ENCODE measurements at regions of chr6 and their contacts with region 1.

Region 1: DNA sequence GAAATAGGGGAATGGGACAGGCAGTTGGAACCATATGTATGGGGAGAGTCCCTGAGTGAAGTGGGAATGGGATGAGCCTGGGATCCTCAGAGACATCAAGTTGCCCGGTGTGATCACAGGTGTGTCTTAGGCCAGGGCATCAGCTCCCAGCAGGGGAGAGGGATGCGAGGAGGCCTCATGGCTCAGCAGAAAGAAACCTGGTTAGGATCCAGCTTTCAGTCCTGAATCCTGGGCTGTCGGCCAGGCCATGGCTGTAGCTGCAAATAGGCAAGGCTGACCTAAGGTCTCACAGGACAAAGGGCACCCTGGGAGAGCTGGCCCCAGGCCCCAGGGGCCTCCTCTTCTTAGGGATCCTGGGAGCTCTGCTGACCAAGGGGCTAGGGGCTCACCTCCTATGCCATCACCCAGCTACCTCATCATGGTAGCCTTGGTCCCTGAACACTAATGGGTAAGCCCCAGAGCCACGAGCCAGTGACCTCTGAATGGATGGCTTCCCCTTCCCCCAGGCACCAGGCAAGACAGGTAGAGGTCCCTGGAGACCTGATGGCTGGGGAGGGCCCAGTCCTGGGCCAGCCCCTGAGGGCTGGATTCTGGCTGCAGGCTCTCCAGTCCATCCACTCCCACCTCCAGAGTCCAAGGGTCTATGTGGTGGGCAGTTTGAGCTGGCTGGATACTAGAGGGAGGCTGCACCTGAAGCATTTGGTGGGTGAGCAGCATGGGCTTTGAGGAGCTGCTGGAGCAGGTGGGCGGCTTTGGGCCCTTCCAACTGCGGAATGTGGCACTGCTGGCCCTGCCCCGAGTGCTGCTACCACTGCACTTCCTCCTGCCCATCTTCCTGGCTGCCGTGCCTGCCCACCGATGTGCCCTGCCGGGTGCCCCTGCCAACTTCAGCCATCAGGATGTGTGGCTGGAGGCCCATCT is at the start of gene SLC22A7:
- DNase-seq: peak; percentile 60
- ATAC-seq: peak; percentile 84
- H3K4me3 ChIP-seq: peak within 1 kb of the TSS; percentile 16 to 61 (median 17); a peak in 5 of 6 replicates
- H3K27ac ChIP-seq: peak within 1 kb of the TSS; percentile 70
- H3K4me1 ChIP-seq: peaks cover 72% of the 10 kb centered on the region
- H3K27me3 ChIP-seq: no peaks in the 10 kb centered on the region
- CTCF ChIP-seq: no peak
- EP300 ChIP-seq: peak in 1 of 2 experiments; percentile 51; a peak in 1 of 4 replicates
- POLR2A ChIP-seq: peak in 1 of 2 experiments; percentile 77; a peak in 2 of 4 replicates
- RAD21 ChIP-seq: peak; percentile 4; the same call in 1 of the 2 replicates
- total RNA-seq, gene SLC22A7: 8.6 and 22.6 TPM in 2 replicates

Region 2: GRCh38 chr6:43211955-43212354 is 85.9 kb before region 1 on chr6:
- CTCF ChIA-PET with region 1: no interaction called
- POLR2A ChIA-PET with region 1: no interaction called
- in situ Hi-C with region 1: no loop called
- intact Hi-C with region 1: no loop called
- DNase-seq: peak; percentile 30
- ATAC-seq: peak; percentile 67
- H3K4me3 ChIP-seq: no peak overlapping the region
- H3K27ac ChIP-seq: no peak overlapping the region
- H3K4me1 ChIP-seq: no peaks in the 10 kb centered on the region
- H3K27me3 ChIP-seq: no peaks in the 10 kb centered on the region
- CTCF ChIP-seq: peak; percentile 51
- EP300 ChIP-seq: no peak
- POLR2A ChIP-seq: no peak
- RAD21 ChIP-seq: no peak

Region 3: GRCh38 chr6:43269273-43270007 is 28.5 kb before region 1 on chr6:
- CTCF ChIA-PET with region 1: no interaction called
- POLR2A ChIA-PET with region 1: interaction called, 314 read pairs
- in situ Hi-C with region 1: no loop called
- intact Hi-C with region 1: no loop called
- DNase-seq: no peak
- ATAC-seq: no peak
- H3K4me3 ChIP-seq: no peak overlapping the region
- H3K27ac ChIP-seq: peak overlapping the region; percentile 91
- H3K4me1 ChIP-seq: peaks cover 99% of the 10 kb centered on the region
- H3K27me3 ChIP-seq: no peaks in the 10 kb centered on the region
- CTCF ChIP-seq: no peak
- EP300 ChIP-seq: no peak
- POLR2A ChIP-seq: no peak
- RAD21 ChIP-seq: no peak

Region 4: DNA sequence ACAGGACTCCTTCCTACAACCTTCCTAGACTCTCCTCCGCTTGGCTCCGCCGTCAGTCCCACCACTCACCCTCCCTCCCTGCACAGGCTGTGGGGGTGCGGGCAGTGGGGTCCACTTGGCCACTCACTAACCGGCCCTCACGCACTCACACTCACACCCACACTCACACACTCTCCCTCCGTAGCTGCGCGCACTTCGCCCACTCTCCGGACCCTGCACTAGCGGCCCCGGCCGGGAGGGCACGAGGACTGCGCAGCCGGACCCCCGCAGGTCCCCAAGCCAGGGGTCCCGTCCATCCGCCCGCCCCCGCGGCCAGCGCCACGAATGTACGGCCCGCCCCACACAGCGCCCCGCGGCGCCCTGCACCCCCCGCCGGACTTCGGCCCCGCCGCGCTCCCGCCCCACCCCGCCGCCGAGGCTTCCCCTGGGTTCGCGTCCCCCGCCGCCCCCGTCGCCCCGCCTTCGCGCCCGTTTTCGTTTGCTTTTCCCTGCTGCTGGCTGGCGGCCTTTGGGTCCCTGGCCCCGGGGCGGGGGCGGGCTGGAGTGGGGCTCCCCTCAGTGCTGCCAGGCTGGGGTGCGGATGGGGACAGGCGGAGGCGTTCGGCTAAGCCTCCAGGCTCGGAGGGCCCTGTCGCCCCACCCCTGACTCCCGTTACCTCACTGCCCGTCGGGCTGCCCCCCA is 22.8 kb before region 1 on chr6:
- CTCF ChIA-PET with region 1: no interaction called
- POLR2A ChIA-PET with region 1: interaction called, 314 read pairs
- in situ Hi-C with region 1: no loop called
- intact Hi-C with region 1: no loop called
- DNase-seq: peak; percentile 67
- ATAC-seq: peak; percentile 54
- H3K4me3 ChIP-seq: peak overlapping the region; percentile 59 to 86 (median 78)
- H3K27ac ChIP-seq: peak overlapping the region; percentile 94
- H3K4me1 ChIP-seq: peaks cover 96% of the 10 kb centered on the region
- H3K27me3 ChIP-seq: no peaks in the 10 kb centered on the region
- CTCF ChIP-seq: peak; percentile 6; the same call in 1 of the 2 replicates
- EP300 ChIP-seq: peak; percentile 11 to 80; a peak in 2 of 4 replicates
- POLR2A ChIP-seq: peak in 1 of 2 experiments; percentile 70; a peak in 2 of 4 replicates
- RAD21 ChIP-seq: peak; percentile 51; the same call in 1 of the 2 replicates

Region 5: DNA sequence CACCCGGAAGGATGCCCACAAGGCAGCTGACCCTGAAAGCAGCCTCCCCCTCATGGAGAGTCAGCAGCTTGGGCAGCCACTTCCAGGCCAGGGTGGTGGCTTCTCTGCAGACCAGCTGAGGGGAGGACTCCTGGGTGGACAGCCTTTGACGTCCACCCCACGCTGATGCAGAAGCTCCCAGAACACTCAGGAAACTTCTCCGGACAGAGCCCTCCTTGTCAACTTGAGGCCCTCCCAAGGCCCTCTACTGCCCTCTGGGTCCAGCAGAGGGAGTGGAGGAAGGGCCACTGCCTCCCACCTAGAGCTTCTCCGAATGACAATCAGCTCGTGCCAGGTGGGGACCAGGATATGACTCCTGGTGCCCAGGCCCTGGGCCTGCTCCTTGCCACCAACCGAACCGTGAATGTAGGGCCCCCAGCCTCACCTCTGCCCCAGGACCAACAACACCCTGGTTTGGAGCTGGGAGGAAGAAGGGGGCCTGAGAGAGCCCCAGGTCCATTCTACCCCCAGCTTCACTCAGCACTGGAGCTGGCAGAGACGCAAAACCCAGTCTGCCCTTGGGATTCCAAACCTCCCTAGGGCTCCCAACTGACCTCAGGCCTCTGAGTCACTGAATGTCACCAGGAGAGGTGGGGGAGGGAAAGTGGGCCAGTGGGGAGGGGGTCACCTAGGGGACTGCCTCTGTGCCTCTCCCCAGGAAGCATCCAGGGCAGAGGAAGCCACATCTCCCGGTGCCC is 10.8 kb before region 1 on chr6:
- CTCF ChIA-PET with region 1: no interaction called
- POLR2A ChIA-PET with region 1: interaction called, 67 read pairs
- in situ Hi-C with region 1: no loop called
- intact Hi-C with region 1: no loop called
- DNase-seq: peak; percentile 71
- ATAC-seq: peak; percentile 57
- H3K4me3 ChIP-seq: peak overlapping the region in 1 of 3 experiments; percentile 42; a peak in 1 of 6 replicates
- H3K27ac ChIP-seq: peak overlapping the region; percentile 72
- H3K4me1 ChIP-seq: peaks cover 74% of the 10 kb centered on the region
- H3K27me3 ChIP-seq: no peaks in the 10 kb centered on the region
- CTCF ChIP-seq: peak; percentile 74
- EP300 ChIP-seq: 0 out of 4 replicates have a peak, but pooled peaks of 1 of the 2 experiments have one; percentile 2
- POLR2A ChIP-seq: no peak
- RAD21 ChIP-seq: peak; percentile 87

Region 6: DNA sequence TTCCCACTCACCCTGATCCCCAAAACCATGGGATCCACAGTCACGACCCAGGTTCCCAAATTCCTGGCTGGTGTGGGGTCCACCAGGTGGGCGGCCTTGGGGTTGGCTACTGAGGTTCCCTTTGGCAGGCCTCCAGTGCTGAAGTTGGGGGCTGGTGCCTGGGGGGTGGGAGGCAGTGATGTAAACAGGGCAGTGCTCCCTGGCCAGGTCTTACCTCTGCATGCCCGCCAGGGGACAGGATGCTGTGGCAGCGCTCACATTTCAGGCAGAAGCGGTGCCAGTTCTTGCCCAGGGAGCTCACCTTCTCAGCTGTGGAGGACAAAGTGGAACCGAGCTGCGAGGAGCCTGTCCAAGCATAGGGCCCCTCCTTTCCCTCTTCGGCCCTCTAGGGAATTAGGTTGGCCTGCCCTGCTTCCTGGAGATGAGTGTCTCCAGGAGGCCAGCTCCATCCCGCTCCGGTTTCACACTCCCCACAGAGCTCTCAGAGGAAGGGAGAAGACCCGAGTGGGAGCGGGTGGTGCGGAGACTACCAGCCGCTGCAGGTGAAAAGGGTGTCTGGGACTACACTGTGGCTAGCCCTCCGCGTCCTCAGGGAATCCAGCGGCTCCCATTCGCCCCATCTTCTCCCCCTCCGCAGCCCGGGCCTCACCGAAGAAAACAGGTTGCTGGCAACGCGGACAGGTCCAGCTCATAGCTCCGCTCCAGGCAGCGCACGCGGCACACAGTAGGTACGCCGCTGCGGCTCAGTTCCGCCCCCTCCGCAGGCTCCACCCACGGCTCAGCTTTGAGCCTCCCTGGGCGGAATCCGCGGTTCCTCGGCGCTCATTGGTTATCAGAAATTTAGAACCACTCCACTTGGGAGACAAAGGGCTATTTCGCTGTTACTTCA is 10.4 kb after region 1 on chr6 and contains the start of gene CRIP3:
- CTCF ChIA-PET with region 1: no interaction called
- POLR2A ChIA-PET with region 1: interaction called, 28 read pairs
- in situ Hi-C with region 1: no loop called
- intact Hi-C with region 1: no loop called
- DNase-seq: no peak
- ATAC-seq: peak; percentile 69
- H3K4me3 ChIP-seq: peak within 1 kb of the TSS; percentile 38 to 70 (median 43)
- H3K27ac ChIP-seq: no peak within 1 kb of the TSS
- H3K4me1 ChIP-seq: peaks cover 43% of the 10 kb centered on the region
- H3K27me3 ChIP-seq: no peaks in the 10 kb centered on the region
- CTCF ChIP-seq: 0 out of 2 replicates have a peak, but pooled peaks have one; percentile 1
- EP300 ChIP-seq: no peak
- POLR2A ChIP-seq: peak in 1 of 2 experiments; percentile 23; a peak in 2 of 4 replicates
- RAD21 ChIP-seq: 0 out of 2 replicates have a peak, but pooled peaks have one; percentile 17
- total RNA-seq, gene CRIP3: 3.5 and 6.3 TPM in 2 replicates